Caco-2 (cell line): ENCODE measurements at regions of chr22 and their contacts with region 1.

Region 1: GRCh38 chr22:32080904-32081303 is 37.8 kb downstream of the SLC5A1 start:
- DNase-seq: peak in 1 of 2 experiments; percentile 43
- H3K4me3 ChIP-seq: no peak overlapping the region
- H3K4me3 Mint-ChIP-seq: no peak overlapping the region
- H3K27ac Mint-ChIP-seq: no peak overlapping the region
- H3K4me1 ChIP-seq: peaks cover 32% of the 10 kb centered on the region
- H3K4me1 Mint-ChIP-seq: peaks cover 6% of the 10 kb centered on the region
- H3K27me3 ChIP-seq: no peaks in the 10 kb centered on the region
- H3K27me3 Mint-ChIP-seq: no peaks in the 10 kb centered on the region
- CTCF ChIP-seq: peak; percentile 66 to 70

Region 2: GRCh38 chr22:31977141-31977841 is 103.6 kb before region 1 on chr22:
- CTCF ChIA-PET with region 1: interaction called, 7 read pairs
- POLR2A ChIA-PET with region 1: no interaction called
- intact Hi-C with region 1: loop called (anchors 1 kb)
- DNase-seq: peak; percentile 84 to 85
- H3K4me3 ChIP-seq: no peak overlapping the region
- H3K4me3 Mint-ChIP-seq: no peak overlapping the region
- H3K27ac Mint-ChIP-seq: no peak overlapping the region
- H3K4me1 ChIP-seq: no peaks in the 10 kb centered on the region
- H3K4me1 Mint-ChIP-seq: no peaks in the 10 kb centered on the region
- H3K27me3 ChIP-seq: no peaks in the 10 kb centered on the region
- H3K27me3 Mint-ChIP-seq: no peaks in the 10 kb centered on the region
- CTCF ChIP-seq: peak; percentile 60 to 88

Region 3: DNA sequence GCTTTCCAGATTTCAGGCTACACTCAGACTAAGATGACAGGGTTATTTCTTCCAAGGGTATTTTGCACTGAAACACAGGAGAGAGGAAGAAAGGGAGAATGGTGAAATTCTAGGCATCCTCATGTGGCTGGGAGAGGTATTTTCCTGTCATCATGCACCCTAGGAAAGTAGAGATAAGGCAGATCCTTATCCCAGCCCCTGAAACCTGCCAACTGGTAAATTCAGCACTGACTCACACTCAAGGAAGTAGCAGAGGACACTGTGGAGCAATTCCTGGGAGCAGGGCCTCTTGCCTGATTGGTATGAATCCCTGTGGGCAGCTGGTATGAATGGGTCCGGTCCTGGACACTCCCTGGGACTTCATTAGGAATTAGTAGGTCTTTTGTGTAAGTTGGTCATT is 75.5 kb before region 1 on chr22:
- CTCF ChIA-PET with region 1: no interaction called
- POLR2A ChIA-PET with region 1: no interaction called
- intact Hi-C with region 1: no loop called
- DNase-seq: peak; percentile 10 to 47
- H3K4me3 ChIP-seq: no peak overlapping the region
- H3K4me3 Mint-ChIP-seq: no peak overlapping the region
- H3K27ac Mint-ChIP-seq: no peak overlapping the region
- H3K4me1 ChIP-seq: peaks cover 4% of the 10 kb centered on the region; the same call in 1 of the 2 replicates
- H3K4me1 Mint-ChIP-seq: peaks cover 3% of the 10 kb centered on the region
- H3K27me3 ChIP-seq: no peaks in the 10 kb centered on the region
- H3K27me3 Mint-ChIP-seq: no peaks in the 10 kb centered on the region
- CTCF ChIP-seq: no peak

Region 4: GRCh38 chr22:32058656-32059260 is 22.1 kb before region 1 on chr22:
- CTCF ChIA-PET with region 1: no interaction called
- POLR2A ChIA-PET with region 1: no interaction called
- intact Hi-C with region 1: no loop called
- DNase-seq: no peak
- H3K4me3 ChIP-seq: no peak overlapping the region
- H3K4me3 Mint-ChIP-seq: no peak overlapping the region
- H3K27ac Mint-ChIP-seq: no peak overlapping the region
- H3K4me1 ChIP-seq: peaks cover 6% of the 10 kb centered on the region; the same call in 1 of the 2 replicates
- H3K4me1 Mint-ChIP-seq: no peaks in the 10 kb centered on the region
- H3K27me3 ChIP-seq: no peaks in the 10 kb centered on the region
- H3K27me3 Mint-ChIP-seq: peaks cover 3% of the 10 kb centered on the region
- CTCF ChIP-seq: no peak